A673 (cell line): ENCODE measurements at regions of chr1 and their contacts with region 1.

Region 1: GRCh38 chr1:109295712-109296415 is 10.9 kb downstream of the MYBPHL start:
- DNase-seq: no peak
- H3K4me3 ChIP-seq: no peak overlapping the region
- H3K27ac ChIP-seq: no peak overlapping the region
- H3K4me1 ChIP-seq: no peaks in the 10 kb centered on the region
- H3K27me3 ChIP-seq: peaks cover 2% of the 10 kb centered on the region
- CTCF ChIP-seq: no peak

Region 2: GRCh38 chr1:109379907-109380306 is 84.0 kb after region 1 on chr1:
- CTCF ChIA-PET with region 1: interaction called, 15 read pairs
- POLR2A ChIA-PET with region 1: no interaction called
- intact Hi-C with region 1: no loop called
- DNase-seq: no peak
- H3K4me3 ChIP-seq: no peak overlapping the region
- H3K27ac ChIP-seq: no peak overlapping the region
- H3K4me1 ChIP-seq: peaks cover 6% of the 10 kb centered on the region
- H3K27me3 ChIP-seq: no peaks in the 10 kb centered on the region
- CTCF ChIP-seq: no peak